Naive thymus-derived CD4-positive, alpha-beta T cell (primary cell): ENCODE measurements at regions of chr14 and their contacts with region 1.

Region 1: DNA sequence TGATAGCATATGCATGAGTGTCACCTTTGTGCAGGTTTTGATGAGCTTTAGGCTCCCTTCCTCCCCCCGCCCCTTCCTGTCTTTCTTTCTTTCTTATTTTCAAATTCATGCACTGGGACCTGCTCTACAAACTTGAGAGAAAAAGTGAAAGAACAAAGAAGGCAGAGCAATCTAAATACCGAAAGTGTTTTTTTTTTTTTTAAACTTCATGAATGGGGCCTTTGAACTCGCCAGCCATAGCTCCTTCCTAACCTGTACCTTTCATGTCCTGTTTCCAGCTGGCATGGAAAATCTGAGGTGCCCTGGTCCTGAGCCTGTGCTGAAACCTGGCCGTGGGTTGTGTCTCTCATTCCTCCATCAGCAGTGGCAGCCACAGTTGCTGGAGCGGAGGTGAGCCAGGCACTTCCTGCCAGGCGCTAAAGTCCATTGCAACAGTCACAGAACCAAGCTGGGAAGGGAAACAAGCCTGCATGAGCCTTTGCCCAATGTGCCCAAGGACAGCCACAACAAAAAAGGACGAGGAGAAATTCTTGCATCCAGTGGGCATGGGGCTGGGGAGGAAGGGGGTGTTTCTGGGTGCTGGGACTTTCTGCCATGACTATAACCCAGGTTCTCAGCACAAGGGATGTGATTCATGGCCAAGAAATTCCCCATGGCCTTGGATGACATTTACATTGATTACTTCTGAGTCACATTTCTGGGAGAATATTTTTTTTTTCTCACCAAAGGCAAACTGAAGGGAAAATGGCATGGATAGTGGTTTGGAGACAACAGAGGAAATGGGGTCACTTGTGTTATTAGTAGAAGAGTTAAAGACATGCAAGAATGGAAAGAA is 102.7 kb downstream of the TMEM30B start:
- DNase-seq: peak in 4 of 9 donors; percentile 4 to 43 (median 24)
- ATAC-seq: peak; percentile 42
- H3K4me3 ChIP-seq: peak overlapping the region; percentile 22
- H3K4me3 Mint-ChIP-seq: peak overlapping the region; percentile 63 to 83 (median 75)
- H3K27ac ChIP-seq: no peak overlapping the region
- H3K27ac Mint-ChIP-seq: peak overlapping the region in 8 of 9 donors; percentile 19 to 93 (median 65)
- H3K4me1 ChIP-seq: peaks cover 0 to 8% of the 10 kb centered on the region in 2 donors
- H3K4me1 Mint-ChIP-seq: peaks cover 10 to 37% (median 17%) of the 10 kb centered on the region in 7 donors
- H3K27me3 ChIP-seq: no peaks in the 10 kb centered on the region
- H3K27me3 Mint-ChIP-seq: peaks cover 0 to 12% (median 4%) of the 10 kb centered on the region in 5 donors

Region 2: GRCh38 chr14:61034416-61035120 is 143.9 kb before region 1 on chr14:
- CTCF ChIA-PET with region 1: no interaction called
- POLR2A ChIA-PET with region 1: no interaction called
- intact Hi-C with region 1: loop called in 1 of 2 experiments (anchors 10 kb)
- DNase-seq: peak in 1 of 9 donors; percentile 0
- ATAC-seq: no peak
- H3K4me3 ChIP-seq: no peak overlapping the region
- H3K4me3 Mint-ChIP-seq: peak overlapping the region in 1 of 10 donors; percentile 31
- H3K27ac ChIP-seq: no peak overlapping the region
- H3K27ac Mint-ChIP-seq: peak overlapping the region in 2 of 9 donors; percentile 9 to 67
- H3K4me1 ChIP-seq: no peaks in the 10 kb centered on the region
- H3K4me1 Mint-ChIP-seq: peaks cover 0 to 11% (median 5%) of the 10 kb centered on the region in 7 donors
- H3K27me3 ChIP-seq: no peaks in the 10 kb centered on the region
- H3K27me3 Mint-ChIP-seq: no peaks in the 10 kb centered on the region

Region 3: DNA sequence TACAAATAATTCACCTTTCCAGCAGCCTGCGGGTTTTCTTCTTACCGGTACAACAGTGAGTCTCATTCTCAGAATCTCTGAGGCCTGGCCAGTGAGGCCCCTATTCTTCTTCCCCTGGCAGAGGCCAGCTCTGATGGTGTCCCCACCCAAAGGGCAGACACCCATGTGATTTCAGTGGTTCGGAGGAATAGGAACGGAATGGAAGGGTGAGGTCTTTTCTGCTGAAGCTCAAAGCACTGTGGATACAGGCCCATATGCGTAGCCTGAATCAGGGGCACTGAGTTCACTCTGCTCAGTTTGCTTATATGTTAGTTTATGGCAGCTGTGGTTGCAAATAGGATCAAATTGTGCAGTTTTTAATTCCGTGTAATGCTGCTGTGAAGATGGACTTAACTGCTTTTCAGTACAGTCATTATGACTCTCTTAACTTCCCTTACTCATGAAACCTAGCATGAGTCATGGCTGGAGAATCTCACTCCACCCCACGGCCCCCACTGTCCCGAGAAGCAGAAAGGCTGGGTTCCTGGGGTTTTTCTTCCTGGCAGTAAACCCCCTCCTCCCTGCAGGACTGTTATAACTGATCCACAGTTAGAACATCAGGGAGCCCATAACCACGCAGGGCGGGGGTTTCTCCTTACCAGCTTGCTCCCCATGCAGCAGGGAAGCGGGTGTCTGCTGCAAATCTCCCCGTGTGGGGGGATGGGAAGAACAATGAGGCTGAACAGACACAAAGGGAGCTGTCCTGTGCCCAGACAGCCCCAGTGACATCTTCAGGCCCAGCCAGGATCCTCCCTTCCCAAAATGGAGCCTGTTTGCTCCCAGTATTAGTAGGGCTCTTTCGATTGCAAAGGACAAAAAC is 74.7 kb before region 1 on chr14:
- CTCF ChIA-PET with region 1: no interaction called
- POLR2A ChIA-PET with region 1: no interaction called
- intact Hi-C with region 1: loop called in 1 of 2 experiments (anchors 5 kb)
- DNase-seq: peak in 1 of 9 donors; percentile 50
- ATAC-seq: peak; percentile 81
- H3K4me3 ChIP-seq: no peak overlapping the region
- H3K4me3 Mint-ChIP-seq: peak overlapping the region in 1 of 10 donors; percentile 34
- H3K27ac ChIP-seq: no peak overlapping the region
- H3K27ac Mint-ChIP-seq: peak overlapping the region in 1 of 9 donors; percentile 87
- H3K4me1 ChIP-seq: no peaks in the 10 kb centered on the region
- H3K4me1 Mint-ChIP-seq: peaks cover 0 to 25% (median 0%) of the 10 kb centered on the region in 7 donors
- H3K27me3 ChIP-seq: no peaks in the 10 kb centered on the region
- H3K27me3 Mint-ChIP-seq: no peaks in the 10 kb centered on the region

Region 4: DNA sequence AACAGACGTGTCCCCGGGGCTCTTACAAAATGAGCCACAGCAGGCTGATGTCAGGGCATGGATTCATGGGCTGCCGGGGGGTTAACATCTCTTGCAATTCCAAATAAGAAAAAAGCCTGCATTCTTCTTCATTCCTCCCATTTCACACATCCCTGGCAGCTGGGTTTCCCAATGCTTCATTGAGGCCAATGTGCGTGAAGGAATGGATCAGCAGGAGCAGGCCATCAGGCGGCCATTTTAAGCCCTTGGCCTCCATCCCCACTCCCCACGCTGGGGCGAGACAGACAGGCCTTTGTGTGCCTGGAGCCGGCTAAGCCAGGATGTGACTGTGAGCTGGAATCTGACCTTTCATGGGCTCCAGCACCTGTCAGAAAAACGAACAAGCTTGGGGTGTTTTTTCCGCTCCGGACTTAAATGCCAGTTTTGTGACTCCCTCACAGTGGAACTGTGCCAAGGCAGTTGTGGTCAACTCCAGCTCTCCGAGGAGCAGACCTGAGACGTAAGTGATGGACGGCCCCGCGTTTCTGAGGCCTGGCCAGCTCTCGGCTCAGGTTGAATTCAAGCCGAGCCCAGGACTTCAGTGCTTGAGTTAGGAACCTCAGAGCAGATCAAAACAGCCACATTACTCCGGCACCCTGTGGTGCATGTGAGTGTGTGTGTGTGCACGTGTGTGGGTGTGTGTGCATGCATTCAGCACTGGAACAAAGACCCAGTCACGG is 30.5 kb before region 1 on chr14:
- CTCF ChIA-PET with region 1: no interaction called
- POLR2A ChIA-PET with region 1: no interaction called
- intact Hi-C with region 1: no loop called
- DNase-seq: no peak
- ATAC-seq: no peak
- H3K4me3 ChIP-seq: no peak overlapping the region
- H3K4me3 Mint-ChIP-seq: no peak overlapping the region
- H3K27ac ChIP-seq: no peak overlapping the region
- H3K27ac Mint-ChIP-seq: no peak overlapping the region
- H3K4me1 ChIP-seq: no peaks in the 10 kb centered on the region
- H3K4me1 Mint-ChIP-seq: no peaks in the 10 kb centered on the region
- H3K27me3 ChIP-seq: no peaks in the 10 kb centered on the region
- H3K27me3 Mint-ChIP-seq: peaks cover 1 to 9% (median 6%) of the 10 kb centered on the region in 5 donors

Region 5: GRCh38 chr14:61188978-61189808 is 10.8 kb after region 1 on chr14:
- CTCF ChIA-PET with region 1: no interaction called
- POLR2A ChIA-PET with region 1: no interaction called
- intact Hi-C with region 1: loop called in 1 of 2 experiments (anchors 1 kb)
- DNase-seq: peak in 4 of 9 donors; percentile 11 to 48 (median 16)
- ATAC-seq: peak; percentile 54
- H3K4me3 ChIP-seq: no peak overlapping the region
- H3K4me3 Mint-ChIP-seq: peak overlapping the region; percentile 7 to 71 (median 61)
- H3K27ac ChIP-seq: no peak overlapping the region
- H3K27ac Mint-ChIP-seq: peak overlapping the region in 1 of 9 donors; percentile 52
- H3K4me1 ChIP-seq: no peaks in the 10 kb centered on the region
- H3K4me1 Mint-ChIP-seq: peaks cover 6 to 13% (median 10%) of the 10 kb centered on the region in 7 donors
- H3K27me3 ChIP-seq: peaks cover 0 to 7% of the 10 kb centered on the region in 2 donors
- H3K27me3 Mint-ChIP-seq: peaks cover 34 to 65% (median 52%) of the 10 kb centered on the region in 5 donors